Naive thymus-derived CD8-positive, alpha-beta T cell (primary cell): ENCODE measurements at regions of chr1 and their contacts with region 1.

Region 1: GRCh38 chr1:28926629-28927265 is 12.4 kb downstream of the EPB41 start:
- DNase-seq: peak in 9 of 10 donors; percentile 21 to 83 (median 59)
- ATAC-seq: peak; percentile 82 to 94
- H3K4me3 Mint-ChIP-seq: peak overlapping the region; percentile 45 to 79 (median 70)
- H3K27ac Mint-ChIP-seq: peak overlapping the region; percentile 15 to 97 (median 88)
- H3K4me1 Mint-ChIP-seq: peaks cover 23 to 80% (median 67%) of the 10 kb centered on the region in 4 donors
- H3K27me3 Mint-ChIP-seq: no peaks in the 10 kb centered on the region

Region 2: GRCh38 chr1:28322194-28322593 is 604.6 kb before region 1 on chr1:
- POLR2A ChIA-PET with region 1: interaction called, 11 read pairs
- DNase-seq: no peak
- ATAC-seq: no peak
- H3K4me3 Mint-ChIP-seq: no peak overlapping the region
- H3K27ac Mint-ChIP-seq: no peak overlapping the region
- H3K4me1 Mint-ChIP-seq: peaks cover 0 to 8% (median under 1%) of the 10 kb centered on the region in 4 donors
- H3K27me3 Mint-ChIP-seq: peaks cover 0 to 4% (median 0%) of the 10 kb centered on the region in 5 donors

Region 3: DNA sequence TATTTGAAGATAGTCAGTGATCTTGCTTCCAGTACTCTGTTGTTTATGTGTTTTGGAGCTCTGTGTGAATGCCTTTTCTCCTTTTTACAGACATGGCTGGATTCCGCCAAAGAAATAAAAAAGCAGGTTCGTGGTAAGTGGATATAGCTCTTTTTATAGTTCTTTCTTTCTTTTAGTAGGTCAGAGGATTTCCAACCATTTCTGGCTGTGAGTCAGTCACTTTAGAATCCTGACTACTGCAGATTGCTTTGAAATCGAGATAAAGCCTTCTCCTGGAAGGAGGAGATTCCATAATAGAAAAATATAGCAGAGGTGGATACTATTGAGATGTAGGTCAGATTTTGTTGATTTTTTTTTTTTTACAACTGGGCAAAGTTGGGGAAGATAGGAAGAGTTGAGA is 85.0 kb after region 1 on chr1:
- POLR2A ChIA-PET with region 1: no interaction called
- DNase-seq: no peak
- ATAC-seq: no peak
- H3K4me3 Mint-ChIP-seq: no peak overlapping the region
- H3K27ac Mint-ChIP-seq: peak overlapping the region in 4 of 10 donors; percentile 40 to 71 (median 65)
- H3K4me1 Mint-ChIP-seq: peaks cover 8 to 20% (median 16%) of the 10 kb centered on the region in 4 donors
- H3K27me3 Mint-ChIP-seq: no peaks in the 10 kb centered on the region